Naive thymus-derived CD4-positive, alpha-beta T cell (primary cell): ENCODE measurements at regions of chr18 and their contacts with region 1.

Region 1: DNA sequence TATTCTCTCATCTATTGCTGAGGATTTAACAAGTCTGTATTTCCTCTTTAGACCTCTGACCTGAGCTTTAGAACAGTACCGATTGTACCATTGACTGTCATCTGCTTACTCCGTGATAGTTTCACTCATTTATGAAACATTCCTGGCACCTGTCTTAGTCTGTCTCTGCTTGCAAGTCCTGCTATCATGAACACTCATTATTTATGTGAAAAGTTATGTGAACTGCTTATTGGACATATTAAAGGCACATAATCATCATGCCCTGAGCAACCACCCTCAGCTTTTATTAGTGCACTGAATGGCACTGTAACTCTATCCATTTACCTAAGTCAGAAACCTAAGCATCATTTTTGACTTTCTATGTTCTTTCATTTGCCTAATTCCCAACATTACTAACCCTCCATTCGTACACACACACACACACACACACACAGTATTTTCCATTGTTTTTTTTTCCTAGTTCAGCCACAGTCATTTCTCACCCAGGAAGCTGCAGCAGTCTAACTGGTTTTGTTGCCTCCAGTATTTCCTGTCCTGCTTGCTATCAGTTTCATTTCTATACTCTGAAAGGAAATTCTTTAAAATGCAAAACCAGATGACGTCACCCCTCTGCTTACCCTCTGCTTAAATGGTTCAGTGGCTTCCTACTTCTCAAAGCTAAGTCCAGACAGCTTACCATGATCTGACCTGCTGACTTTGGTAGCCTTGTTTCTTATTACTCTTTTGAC is 146.1 kb downstream of the HAUS1 start:
- DNase-seq: peak in 8 of 9 donors; percentile 32 to 82 (median 72)
- ATAC-seq: peak; percentile 94
- H3K4me3 ChIP-seq: peak overlapping the region; percentile 41
- H3K4me3 Mint-ChIP-seq: peak overlapping the region; percentile 74 to 95 (median 83)
- H3K27ac ChIP-seq: peak overlapping the region; percentile 75
- H3K27ac Mint-ChIP-seq: peak overlapping the region; percentile 89 to 98 (median 95)
- H3K4me1 ChIP-seq: peaks cover 19 to 21% of the 10 kb centered on the region in 2 donors
- H3K4me1 Mint-ChIP-seq: peaks cover 35 to 74% (median 69%) of the 10 kb centered on the region in 7 donors
- H3K27me3 ChIP-seq: no peaks in the 10 kb centered on the region
- H3K27me3 Mint-ChIP-seq: no peaks in the 10 kb centered on the region

Region 2: GRCh38 chr18:46097801-46098615 is 152.2 kb before region 1 on chr18 and contains the start of gene ATP5F1A:
- CTCF ChIA-PET with region 1: no interaction called
- POLR2A ChIA-PET with region 1: no interaction called
- intact Hi-C with region 1: loop called (anchors 2 to 5 kb)
- DNase-seq: peak; percentile 69 to 86 (median 80)
- ATAC-seq: peak; percentile 94
- H3K4me3 ChIP-seq: peak within 1 kb of the TSS; percentile 92
- H3K4me3 Mint-ChIP-seq: peak within 1 kb of the TSS; percentile 92 to 99 (median 96)
- H3K27ac ChIP-seq: peak within 1 kb of the TSS; percentile 94
- H3K27ac Mint-ChIP-seq: peak within 1 kb of the TSS; percentile 94 to 99 (median 97)
- H3K4me1 ChIP-seq: peaks cover 18 to 32% of the 10 kb centered on the region in 2 donors
- H3K4me1 Mint-ChIP-seq: peaks cover 18 to 43% (median 35%) of the 10 kb centered on the region in 7 donors
- H3K27me3 ChIP-seq: no peaks in the 10 kb centered on the region
- H3K27me3 Mint-ChIP-seq: peaks cover 0 to 2% (median 0%) of the 10 kb centered on the region in 5 donors
- total RNA-seq, gene ATP5F1A: 181 to 311 (median 212) TPM

Region 3: GRCh38 chr18:46155641-46156051 is 94.6 kb before region 1 on chr18:
- CTCF ChIA-PET with region 1: interaction called, 3 read pairs
- POLR2A ChIA-PET with region 1: no interaction called
- intact Hi-C with region 1: loop called in 1 of 2 experiments (anchors 1 kb)
- DNase-seq: peak in 8 of 9 donors; percentile 34 to 66 (median 54)
- ATAC-seq: peak; percentile 93
- H3K4me3 ChIP-seq: peak overlapping the region; percentile 8
- H3K4me3 Mint-ChIP-seq: peak overlapping the region; percentile 35 to 84 (median 78)
- H3K27ac ChIP-seq: peak overlapping the region; percentile 63
- H3K27ac Mint-ChIP-seq: peak overlapping the region; percentile 67 to 98 (median 88)
- H3K4me1 ChIP-seq: peaks cover 39 to 84% of the 10 kb centered on the region in 2 donors
- H3K4me1 Mint-ChIP-seq: peaks cover 42 to 88% (median 81%) of the 10 kb centered on the region in 7 donors
- H3K27me3 ChIP-seq: no peaks in the 10 kb centered on the region
- H3K27me3 Mint-ChIP-seq: peaks cover 0 to 3% (median 0%) of the 10 kb centered on the region in 5 donors

Region 4: DNA sequence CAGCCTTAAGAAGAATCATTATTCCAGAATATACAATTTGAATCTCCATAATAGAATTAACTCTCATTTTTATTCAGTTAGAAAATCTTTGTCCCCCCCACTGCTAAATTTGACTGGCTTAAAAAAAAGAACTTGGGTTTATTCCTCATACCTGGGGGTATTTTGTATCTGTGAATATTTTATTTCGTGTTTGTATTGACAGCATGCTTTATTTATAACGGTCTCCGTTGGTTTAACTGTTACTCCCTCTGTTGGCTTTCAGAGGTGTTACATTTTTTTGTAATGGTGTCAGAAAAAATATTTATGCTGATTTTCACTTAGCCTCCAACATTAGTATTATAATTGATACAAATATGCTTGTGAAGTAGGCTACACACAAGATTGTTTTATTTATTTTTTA is 37.0 kb before region 1 on chr18:
- CTCF ChIA-PET with region 1: interaction called, 3 read pairs
- POLR2A ChIA-PET with region 1: no interaction called
- intact Hi-C with region 1: loop called (anchors 1 kb)
- DNase-seq: peak in 7 of 9 donors; percentile 20 to 47 (median 31)
- ATAC-seq: peak; percentile 69
- H3K4me3 ChIP-seq: no peak overlapping the region
- H3K4me3 Mint-ChIP-seq: peak overlapping the region in 9 of 10 donors; percentile 4 to 72 (median 43)
- H3K27ac ChIP-seq: no peak overlapping the region
- H3K27ac Mint-ChIP-seq: peak overlapping the region in 4 of 9 donors; percentile 27 to 62 (median 56)
- H3K4me1 ChIP-seq: peaks cover 21% of the 10 kb centered on the region in 2 donors
- H3K4me1 Mint-ChIP-seq: peaks cover 40 to 96% (median 84%) of the 10 kb centered on the region in 7 donors
- H3K27me3 ChIP-seq: no peaks in the 10 kb centered on the region
- H3K27me3 Mint-ChIP-seq: no peaks in the 10 kb centered on the region

Region 5: DNA sequence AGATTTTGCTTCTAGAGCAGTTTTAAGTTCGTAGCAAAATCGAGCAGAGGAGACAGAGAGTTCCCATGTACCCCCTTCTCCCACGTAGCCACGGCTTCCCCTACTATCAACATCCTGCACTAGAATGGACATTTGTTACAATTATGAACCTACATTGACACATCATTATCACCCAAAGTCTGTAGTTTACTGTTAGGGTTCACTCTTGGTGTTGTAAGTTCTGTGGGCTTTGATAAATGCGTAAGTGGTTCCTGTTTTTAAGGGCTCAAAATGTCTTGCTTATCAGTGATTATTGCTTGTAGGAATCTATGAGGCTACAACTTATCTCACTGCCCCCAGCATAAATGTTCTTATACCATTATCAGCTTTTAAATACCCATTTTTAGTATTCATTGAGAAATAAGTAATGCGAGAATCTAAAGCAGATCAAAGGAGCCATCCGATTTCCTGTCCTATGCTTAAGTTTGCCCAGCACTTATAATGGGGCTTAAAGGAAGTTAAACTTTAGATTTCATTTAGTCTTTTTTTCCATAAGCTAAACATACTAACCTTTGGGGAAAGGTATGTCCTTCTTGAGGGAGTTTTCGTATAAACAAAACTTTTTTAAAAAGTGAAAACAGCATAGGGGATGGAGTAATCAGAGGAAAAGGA is 27.4 kb before region 1 on chr18:
- CTCF ChIA-PET with region 1: interaction called, 6 read pairs
- POLR2A ChIA-PET with region 1: no interaction called
- intact Hi-C with region 1: loop called in 1 of 2 experiments (anchors 1 kb)
- DNase-seq: peak in 2 of 9 donors; percentile 7 to 16
- ATAC-seq: peak; percentile 75
- H3K4me3 ChIP-seq: no peak overlapping the region
- H3K4me3 Mint-ChIP-seq: peak overlapping the region; percentile 3 to 71 (median 52)
- H3K27ac ChIP-seq: peak overlapping the region; percentile 5
- H3K27ac Mint-ChIP-seq: peak overlapping the region; percentile 9 to 81 (median 50)
- H3K4me1 ChIP-seq: peaks cover 6 to 27% of the 10 kb centered on the region in 2 donors
- H3K4me1 Mint-ChIP-seq: peaks cover 46 to 93% (median 84%) of the 10 kb centered on the region in 7 donors
- H3K27me3 ChIP-seq: no peaks in the 10 kb centered on the region
- H3K27me3 Mint-ChIP-seq: no peaks in the 10 kb centered on the region

Region 6: GRCh38 chr18:46237891-46238290 is 12.4 kb before region 1 on chr18:
- CTCF ChIA-PET with region 1: no interaction called
- POLR2A ChIA-PET with region 1: no interaction called
- intact Hi-C with region 1: loop called in 1 of 2 experiments (anchors 2 kb)
- DNase-seq: no peak
- ATAC-seq: no peak
- H3K4me3 ChIP-seq: no peak overlapping the region
- H3K4me3 Mint-ChIP-seq: no peak overlapping the region
- H3K27ac ChIP-seq: no peak overlapping the region
- H3K27ac Mint-ChIP-seq: no peak overlapping the region
- H3K4me1 ChIP-seq: peaks cover 0 to 15% of the 10 kb centered on the region in 2 donors
- H3K4me1 Mint-ChIP-seq: peaks cover 17 to 77% (median 56%) of the 10 kb centered on the region in 7 donors
- H3K27me3 ChIP-seq: no peaks in the 10 kb centered on the region
- H3K27me3 Mint-ChIP-seq: no peaks in the 10 kb centered on the region

Region 7: DNA sequence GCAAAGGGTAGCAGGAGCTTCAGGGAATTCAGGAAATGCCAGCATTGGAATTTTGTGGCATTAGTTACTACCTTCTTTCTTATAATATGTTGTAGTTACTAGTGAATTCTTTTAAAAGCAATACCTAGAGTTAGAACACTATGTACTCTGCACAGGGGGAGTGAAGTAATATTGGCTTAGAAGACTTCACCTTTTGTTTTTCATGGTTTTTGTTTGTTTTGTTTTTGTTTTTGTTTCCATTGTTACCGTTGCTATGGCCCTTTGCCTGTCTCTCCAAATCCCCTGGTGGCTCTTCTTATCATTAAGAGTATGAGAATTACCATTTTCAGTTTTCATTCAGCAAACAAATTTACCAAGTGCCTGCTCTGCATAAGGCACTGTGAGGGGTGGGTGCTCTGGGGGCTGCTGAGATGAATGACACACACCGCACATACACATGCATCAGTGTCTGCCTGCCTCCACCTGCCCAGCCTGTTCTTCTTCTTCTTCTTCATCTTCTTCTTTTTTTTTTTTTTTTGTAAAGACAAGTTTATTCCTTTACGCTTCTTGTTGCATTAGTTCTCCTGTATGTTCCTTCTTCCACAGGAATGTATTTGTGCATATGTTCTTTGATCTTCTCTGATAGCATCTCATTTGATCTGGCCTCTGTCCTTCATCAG is 14.1 kb after region 1 on chr18:
- CTCF ChIA-PET with region 1: no interaction called
- POLR2A ChIA-PET with region 1: no interaction called
- intact Hi-C with region 1: loop called in 1 of 2 experiments (anchors 1 kb)
- DNase-seq: peak in 2 of 9 donors; percentile 26 to 27
- ATAC-seq: peak; percentile 54
- H3K4me3 ChIP-seq: no peak overlapping the region
- H3K4me3 Mint-ChIP-seq: no peak overlapping the region
- H3K27ac ChIP-seq: no peak overlapping the region
- H3K27ac Mint-ChIP-seq: peak overlapping the region in 2 of 9 donors; percentile 31 to 50
- H3K4me1 ChIP-seq: no peaks in the 10 kb centered on the region
- H3K4me1 Mint-ChIP-seq: peaks cover 10 to 76% (median 22%) of the 10 kb centered on the region in 7 donors
- H3K27me3 ChIP-seq: no peaks in the 10 kb centered on the region
- H3K27me3 Mint-ChIP-seq: no peaks in the 10 kb centered on the region

Region 8: GRCh38 chr18:46849007-46849406 is 598.8 kb after region 1 on chr18:
- CTCF ChIA-PET with region 1: no interaction called
- POLR2A ChIA-PET with region 1: no interaction called
- intact Hi-C with region 1: no loop called
- DNase-seq: no peak
- ATAC-seq: no peak
- H3K4me3 ChIP-seq: no peak overlapping the region
- H3K4me3 Mint-ChIP-seq: no peak overlapping the region
- H3K27ac ChIP-seq: no peak overlapping the region
- H3K27ac Mint-ChIP-seq: no peak overlapping the region
- H3K4me1 ChIP-seq: no peaks in the 10 kb centered on the region
- H3K4me1 Mint-ChIP-seq: peaks cover 0 to 6% (median 0%) of the 10 kb centered on the region in 7 donors
- H3K27me3 ChIP-seq: no peaks in the 10 kb centered on the region
- H3K27me3 Mint-ChIP-seq: no peaks in the 10 kb centered on the region

Region 9: DNA sequence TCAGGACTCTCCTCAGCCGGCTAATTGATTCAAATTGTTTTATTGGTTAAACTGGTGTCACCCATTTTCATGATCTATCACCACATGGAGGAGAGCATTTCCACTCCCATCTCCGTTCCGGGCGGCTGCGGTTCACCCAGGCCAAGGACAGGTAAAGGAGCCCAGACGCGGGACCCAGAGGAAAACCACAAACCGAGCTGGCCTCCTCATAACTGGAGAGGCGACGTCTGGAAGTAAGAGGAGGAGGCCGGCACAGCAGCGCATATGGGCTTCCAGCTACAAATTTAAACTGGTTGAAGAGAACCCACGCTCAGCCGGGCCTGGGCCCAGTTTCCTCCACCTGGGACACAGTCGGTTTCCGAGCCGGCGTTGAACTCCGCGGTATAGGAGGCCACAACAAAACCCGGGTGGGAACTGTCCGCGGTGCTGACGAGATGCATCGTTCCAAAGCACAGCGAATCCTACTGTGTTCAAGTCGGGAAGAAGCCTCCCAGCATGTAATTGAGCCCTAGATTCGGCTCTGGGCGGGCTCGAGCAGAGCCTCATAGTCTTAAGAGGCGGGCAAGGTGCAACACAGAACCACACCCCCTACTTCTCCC is 1004.2 kb after region 1 on chr18:
- CTCF ChIA-PET with region 1: no interaction called
- POLR2A ChIA-PET with region 1: no interaction called
- intact Hi-C with region 1: no loop called
- DNase-seq: peak in 1 of 9 donors; percentile 5
- ATAC-seq: no peak
- H3K4me3 ChIP-seq: no peak overlapping the region
- H3K4me3 Mint-ChIP-seq: no peak overlapping the region
- H3K27ac ChIP-seq: no peak overlapping the region
- H3K27ac Mint-ChIP-seq: no peak overlapping the region
- H3K4me1 ChIP-seq: no peaks in the 10 kb centered on the region
- H3K4me1 Mint-ChIP-seq: peaks cover 0 to 15% (median 0%) of the 10 kb centered on the region in 7 donors
- H3K27me3 ChIP-seq: peaks cover 8 to 11% of the 10 kb centered on the region in 2 donors
- H3K27me3 Mint-ChIP-seq: peaks cover 81 to 89% (median 85%) of the 10 kb centered on the region in 5 donors